ENCODE measurements at regions of chr1 and their contacts with region 1.

Region 1: DNA sequence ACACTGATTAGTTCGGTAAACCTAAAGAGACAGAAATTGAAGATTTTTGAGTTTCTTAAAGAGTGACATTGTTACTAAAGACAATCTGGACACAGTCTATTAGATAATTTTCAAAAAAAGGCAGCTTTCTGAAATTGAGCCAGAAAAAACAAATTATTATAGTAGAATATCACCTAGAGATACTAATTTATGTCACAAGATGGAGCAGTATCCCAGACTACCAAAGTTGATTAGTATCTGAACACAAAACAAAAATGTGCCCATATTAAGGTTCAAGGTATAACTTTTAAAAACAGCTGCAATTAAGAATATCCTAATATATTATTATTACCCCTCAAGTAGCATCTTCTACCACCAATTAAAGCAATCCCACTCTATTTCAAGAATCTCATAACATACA is 40.5 kb upstream of the SYT2 start:
- DNase-seq: no peak
- ATAC-seq: peak; percentile 25
- H3K4me3 Mint-ChIP-seq: no peak overlapping the region
- H3K27ac Mint-ChIP-seq: no peak overlapping the region
- H3K4me1 Mint-ChIP-seq: no peaks in the 10 kb centered on the region
- H3K27me3 Mint-ChIP-seq: no peaks in the 10 kb centered on the region
- CTCF ChIP-seq: no peak

Region 2: GRCh38 chr1:202439308-202439707 is 311.4 kb before region 1 on chr1:
- CTCF ChIA-PET with region 1: no interaction called
- POLR2A ChIA-PET with region 1: interaction called, 10 read pairs
- intact Hi-C with region 1: no loop called
- DNase-seq: no peak
- ATAC-seq: no peak
- H3K4me3 Mint-ChIP-seq: no peak overlapping the region
- H3K27ac Mint-ChIP-seq: no peak overlapping the region
- H3K4me1 Mint-ChIP-seq: no peaks in the 10 kb centered on the region
- H3K27me3 Mint-ChIP-seq: no peaks in the 10 kb centered on the region
- CTCF ChIP-seq: no peak

Region 3: DNA sequence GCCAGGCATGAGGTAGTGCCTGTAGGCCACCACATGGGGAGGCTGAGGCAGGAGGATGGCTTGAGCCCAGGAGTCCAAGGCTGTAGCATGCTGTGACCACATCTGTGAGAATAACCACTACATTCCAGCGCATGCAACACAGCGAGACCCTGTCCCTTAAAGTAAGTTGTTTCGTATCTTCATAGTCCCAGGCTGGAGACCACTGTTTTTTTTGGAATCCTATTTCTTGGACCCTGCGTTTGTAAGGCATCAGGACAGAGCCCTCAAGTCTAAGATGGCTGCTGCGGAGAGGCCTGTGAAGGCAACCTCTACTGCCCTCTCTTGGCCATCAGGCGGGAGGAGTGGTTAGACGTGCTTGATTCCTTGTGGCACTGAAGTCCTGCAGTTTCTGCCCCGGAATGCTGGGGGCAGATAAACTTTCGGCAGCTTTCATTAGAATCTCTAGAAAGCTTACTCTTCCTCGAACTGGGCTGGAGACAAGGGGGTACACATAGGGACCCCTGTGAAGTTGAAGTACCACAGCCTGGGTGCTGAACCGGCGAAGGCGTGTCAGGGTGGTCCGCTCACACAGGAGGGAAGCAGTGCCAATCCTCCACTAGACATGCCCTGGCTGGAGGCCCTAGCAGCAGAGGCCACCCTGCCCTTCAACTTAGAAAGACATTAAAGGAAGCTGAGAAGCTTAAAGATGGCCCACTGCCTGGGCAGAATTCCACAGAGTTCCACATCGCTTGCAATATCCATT is 101.6 kb after region 1 on chr1:
- CTCF ChIA-PET with region 1: interaction called, 4 read pairs
- POLR2A ChIA-PET with region 1: no interaction called
- intact Hi-C with region 1: loop called (anchors 5 kb)
- DNase-seq: no peak
- ATAC-seq: peak; percentile 67
- H3K4me3 Mint-ChIP-seq: no peak overlapping the region
- H3K27ac Mint-ChIP-seq: no peak overlapping the region
- H3K4me1 Mint-ChIP-seq: peaks cover 25% of the 10 kb centered on the region
- H3K27me3 Mint-ChIP-seq: no peaks in the 10 kb centered on the region
- CTCF ChIP-seq: no peak

Measured in activated B cell treated with CpG ODN at 0.5 μM for 24 hours (primary cell).